Endothelial cell of umbilical vein (primary cell): ENCODE measurements at regions of chr22 and their contacts with region 1.

Region 1: DNA sequence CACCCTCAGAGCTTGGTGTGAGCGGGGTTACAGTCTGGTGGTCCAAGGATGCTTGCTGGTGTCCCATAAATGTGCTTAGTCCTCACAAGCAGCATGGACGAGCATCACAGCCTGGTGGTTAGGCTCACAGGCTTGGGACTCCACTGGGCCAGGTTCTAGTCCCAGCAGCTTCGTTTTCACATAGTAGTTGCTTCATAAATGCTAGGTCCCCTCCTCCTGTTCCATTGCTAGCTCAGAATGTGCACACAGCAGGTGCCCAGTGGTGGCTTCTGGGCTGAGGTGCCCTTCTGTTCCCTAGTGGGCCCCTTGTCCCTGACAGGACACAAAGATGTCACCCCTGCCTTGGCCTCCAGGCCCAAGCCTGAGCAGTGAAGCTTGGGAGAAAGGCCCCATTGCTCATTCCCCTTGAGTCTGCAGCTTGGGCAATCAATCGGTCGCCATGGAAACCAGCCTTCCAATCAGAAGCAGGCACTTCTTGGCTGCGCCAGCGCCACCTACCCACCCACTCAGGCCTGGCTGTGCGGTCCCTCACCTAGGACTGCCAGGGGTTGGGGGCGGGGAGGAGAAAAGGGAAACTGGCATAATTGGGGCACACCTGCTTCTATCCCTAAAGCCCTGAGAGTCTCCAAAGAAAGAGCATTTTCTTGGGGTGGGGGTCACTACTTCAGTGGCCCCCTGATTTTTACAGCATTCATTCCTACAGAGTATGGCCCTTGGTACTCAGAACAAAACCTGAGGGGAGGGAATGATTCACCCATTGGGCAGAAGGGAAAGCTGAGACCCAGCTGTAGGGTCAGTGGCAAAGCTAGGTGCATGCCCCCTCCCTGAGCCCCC is 48.1 kb downstream of the CYTH4 start:
- DNase-seq: peak; percentile 48
- H3K4me3 ChIP-seq: no peak overlapping the region
- H3K27ac ChIP-seq: no peak overlapping the region
- H3K4me1 ChIP-seq: peaks cover 31% of the 10 kb centered on the region
- H3K27me3 ChIP-seq: peaks cover 18 to 20% of the 10 kb centered on the region in 2 experiments
- CTCF ChIP-seq: peak in 1 of 2 donors; percentile 35
- POLR2A ChIP-seq: no peak

Region 2: GRCh38 chr22:37316875-37317371 is 13.5 kb before region 1 on chr22:
- CTCF ChIA-PET with region 1: interaction called, 31 read pairs
- POLR2A ChIA-PET with region 1: no interaction called
- dilution Hi-C with region 1: no loop called
- intact Hi-C with region 1: no loop called
- DNase-seq: peak; percentile 82
- H3K4me3 ChIP-seq: no peak overlapping the region
- H3K27ac ChIP-seq: no peak overlapping the region
- H3K4me1 ChIP-seq: peaks cover 6% of the 10 kb centered on the region
- H3K27me3 ChIP-seq: no peaks in the 10 kb centered on the region
- CTCF ChIP-seq: peak; percentile 93
- POLR2A ChIP-seq: no peak

Region 3: GRCh38 chr22:37340331-37341262 is 10.2 kb after region 1 on chr22:
- CTCF ChIA-PET with region 1: interaction called, 10 read pairs
- POLR2A ChIA-PET with region 1: no interaction called
- dilution Hi-C with region 1: no loop called
- intact Hi-C with region 1: no loop called
- DNase-seq: no peak
- H3K4me3 ChIP-seq: no peak overlapping the region
- H3K27ac ChIP-seq: no peak overlapping the region
- H3K4me1 ChIP-seq: peaks cover 7% of the 10 kb centered on the region
- H3K27me3 ChIP-seq: peaks cover 7 to 10% of the 10 kb centered on the region in 2 experiments
- CTCF ChIP-seq: no peak
- POLR2A ChIP-seq: no peak

Region 4: GRCh38 chr22:37428649-37429586 is 98.5 kb after region 1 on chr22:
- CTCF ChIA-PET with region 1: interaction called, 33 read pairs
- POLR2A ChIA-PET with region 1: no interaction called
- dilution Hi-C with region 1: no loop called
- intact Hi-C with region 1: loop called (anchors 1 kb)
- DNase-seq: peak; percentile 56
- H3K4me3 ChIP-seq: no peak overlapping the region
- H3K27ac ChIP-seq: no peak overlapping the region
- H3K4me1 ChIP-seq: peaks cover 24% of the 10 kb centered on the region
- H3K27me3 ChIP-seq: peaks cover 0 to 8% of the 10 kb centered on the region in 2 experiments
- CTCF ChIP-seq: peak; percentile 64 to 83
- POLR2A ChIP-seq: no peak